ENCODE measurements at regions of chr1 and their contacts with region 1.

Region 1: GRCh38 chr1:9494929-9495758 is 44.1 kb upstream of the SLC25A33 start:
- DNase-seq: peak; percentile 32
- ATAC-seq: peak; percentile 79
- H3K4me3 ChIP-seq: peak overlapping the region; percentile 28; the same call in 1 of the 2 replicates
- H3K27ac ChIP-seq: no peak overlapping the region
- H3K4me1 ChIP-seq: no peaks in the 10 kb centered on the region
- H3K27me3 ChIP-seq: peaks cover 2% of the 10 kb centered on the region; the same call in 1 of the 2 replicates
- CTCF ChIP-seq: peak; percentile 85
- POLR2A ChIP-seq: no peak
- RAD21 ChIP-seq: peak; percentile 74

Region 2: GRCh38 chr1:8903908-8904650 is 591.1 kb before region 1 on chr1:
- CTCF ChIA-PET with region 1: no interaction called
- POLR2A ChIA-PET with region 1: no interaction called
- dilution Hi-C with region 1: no loop called
- in situ Hi-C with region 1: loop called (anchors 25 kb)
- intact Hi-C with region 1: no loop called
- DNase-seq: peak; percentile 96
- ATAC-seq: peak; percentile 92
- H3K4me3 ChIP-seq: no peak overlapping the region
- H3K27ac ChIP-seq: peak overlapping the region; percentile 68
- H3K4me1 ChIP-seq: peaks cover 13% of the 10 kb centered on the region
- H3K27me3 ChIP-seq: no peaks in the 10 kb centered on the region
- CTCF ChIP-seq: no peak
- POLR2A ChIP-seq: no peak
- RAD21 ChIP-seq: no peak

Region 3: DNA sequence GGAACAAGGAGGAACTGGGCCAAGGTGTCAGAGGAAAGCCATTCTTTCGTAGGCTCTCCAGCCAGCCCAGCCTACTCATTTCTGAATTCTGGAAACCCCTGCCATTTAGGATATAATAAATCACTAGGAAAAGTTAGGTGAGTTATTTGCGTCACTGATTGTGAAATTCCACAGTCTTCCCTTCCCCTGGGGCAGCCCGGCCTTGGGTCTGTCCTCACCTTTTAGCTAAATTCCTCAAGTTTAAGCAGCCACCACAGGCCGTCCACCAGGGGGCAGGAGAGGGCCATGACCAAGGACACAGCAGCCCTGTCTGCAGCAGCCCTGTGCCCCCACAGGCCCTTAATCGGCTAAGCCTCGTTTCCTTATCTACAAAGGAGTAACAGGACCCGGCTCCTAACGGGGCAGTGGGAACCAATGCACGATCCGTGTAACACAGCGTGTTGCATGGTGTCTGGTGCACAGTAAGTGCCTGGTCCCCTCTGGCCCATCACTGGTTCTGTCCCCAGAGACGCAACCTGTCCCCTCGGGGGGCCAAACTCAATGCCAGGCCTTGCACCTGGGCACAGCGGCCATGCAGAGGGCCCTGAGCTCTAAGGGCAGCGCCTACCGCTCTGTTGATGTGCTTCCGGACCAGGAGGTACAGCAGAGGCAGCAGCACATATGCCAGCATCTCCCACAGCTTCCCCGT is 384.3 kb before region 1 on chr1:
- CTCF ChIA-PET with region 1: no interaction called
- POLR2A ChIA-PET with region 1: no interaction called
- dilution Hi-C with region 1: no loop called
- in situ Hi-C with region 1: no loop called
- intact Hi-C with region 1: loop called (anchors 2 kb)
- DNase-seq: peak; percentile 87
- ATAC-seq: peak; percentile 97
- H3K4me3 ChIP-seq: no peak overlapping the region
- H3K27ac ChIP-seq: no peak overlapping the region
- H3K4me1 ChIP-seq: peaks cover 2% of the 10 kb centered on the region; the same call in 1 of the 2 replicates
- H3K27me3 ChIP-seq: no peaks in the 10 kb centered on the region
- CTCF ChIP-seq: peak; percentile 91
- POLR2A ChIP-seq: no peak
- RAD21 ChIP-seq: peak; percentile 89

Region 4: GRCh38 chr1:9128520-9129265 is 366.5 kb before region 1 on chr1 and contains the start of gene GPR157:
- CTCF ChIA-PET with region 1: no interaction called
- POLR2A ChIA-PET with region 1: no interaction called
- dilution Hi-C with region 1: no loop called
- in situ Hi-C with region 1: loop called (anchors 25 kb)
- intact Hi-C with region 1: no loop called
- DNase-seq: peak; percentile 61
- ATAC-seq: peak; percentile 98
- H3K4me3 ChIP-seq: peak within 1 kb of the TSS; percentile 85
- H3K27ac ChIP-seq: peak within 1 kb of the TSS; percentile 45; the same call in 1 of the 2 replicates
- H3K4me1 ChIP-seq: peaks cover 12% of the 10 kb centered on the region
- H3K27me3 ChIP-seq: no peaks in the 10 kb centered on the region
- CTCF ChIP-seq: peak; percentile 12; the same call in 1 of the 2 replicates
- POLR2A ChIP-seq: no peak
- RAD21 ChIP-seq: no peak
- total RNA-seq, gene GPR157: 2.2 and 2.7 TPM in 2 replicates

Region 5: DNA sequence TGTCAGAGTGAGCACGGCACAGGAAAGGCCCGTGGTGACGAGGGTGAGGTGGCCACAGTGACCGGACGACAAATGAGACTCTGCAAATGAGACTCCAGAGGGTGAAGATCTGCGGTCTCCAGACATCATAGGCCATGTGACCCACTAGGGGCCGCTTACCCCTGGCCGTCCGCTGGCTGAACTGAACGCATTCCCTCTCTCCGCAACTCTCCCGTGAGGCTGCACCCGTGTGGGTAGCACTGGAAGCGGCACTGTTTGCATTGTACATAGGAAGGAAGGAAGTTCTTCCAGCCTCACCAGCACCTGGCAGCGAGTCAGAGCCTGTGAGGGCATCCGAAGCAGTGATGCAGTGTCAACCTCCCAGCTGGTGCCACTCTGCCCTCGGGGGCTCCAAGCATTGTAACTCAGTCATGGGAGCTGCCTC is 226.1 kb before region 1 on chr1:
- CTCF ChIA-PET with region 1: interaction called, 12 read pairs
- POLR2A ChIA-PET with region 1: no interaction called
- dilution Hi-C with region 1: no loop called
- in situ Hi-C with region 1: no loop called
- intact Hi-C with region 1: loop called (anchors 1 kb)
- DNase-seq: no peak
- ATAC-seq: no peak
- H3K4me3 ChIP-seq: no peak overlapping the region
- H3K27ac ChIP-seq: no peak overlapping the region
- H3K4me1 ChIP-seq: peaks cover 6% of the 10 kb centered on the region
- H3K27me3 ChIP-seq: no peaks in the 10 kb centered on the region
- CTCF ChIP-seq: no peak
- POLR2A ChIP-seq: no peak
- RAD21 ChIP-seq: no peak

Region 6: GRCh38 chr1:9573723-9574122 is 78.6 kb after region 1 on chr1:
- CTCF ChIA-PET with region 1: interaction called, 9 read pairs
- POLR2A ChIA-PET with region 1: no interaction called
- dilution Hi-C with region 1: no loop called
- in situ Hi-C with region 1: loop called (anchors 5 kb)
- intact Hi-C with region 1: loop called (anchors 1 kb)
- DNase-seq: peak; percentile 25
- ATAC-seq: no peak
- H3K4me3 ChIP-seq: no peak overlapping the region
- H3K27ac ChIP-seq: no peak overlapping the region
- H3K4me1 ChIP-seq: no peaks in the 10 kb centered on the region
- H3K27me3 ChIP-seq: no peaks in the 10 kb centered on the region
- CTCF ChIP-seq: peak; percentile 47
- POLR2A ChIP-seq: no peak
- RAD21 ChIP-seq: peak; percentile 53

Region 7: GRCh38 chr1:10472220-10473144 is 977.3 kb after region 1 on chr1 and contains the start of gene DFFA:
- CTCF ChIA-PET with region 1: no interaction called
- POLR2A ChIA-PET with region 1: no interaction called
- dilution Hi-C with region 1: no loop called
- in situ Hi-C with region 1: no loop called
- intact Hi-C with region 1: no loop called
- DNase-seq: peak; percentile 96
- ATAC-seq: peak; percentile 84
- H3K4me3 ChIP-seq: peak within 1 kb of the TSS; percentile 78
- H3K27ac ChIP-seq: peak within 1 kb of the TSS; percentile 41
- H3K4me1 ChIP-seq: no peaks in the 10 kb centered on the region; the same call in 1 of the 2 replicates
- H3K27me3 ChIP-seq: no peaks in the 10 kb centered on the region
- CTCF ChIP-seq: no peak
- POLR2A ChIP-seq: no peak
- RAD21 ChIP-seq: no peak
- total RNA-seq, gene DFFA: 56.1 and 62.6 TPM in 2 replicates